ENCODE measurements at regions of chr15 and their contacts with region 1.

Region 1: DNA sequence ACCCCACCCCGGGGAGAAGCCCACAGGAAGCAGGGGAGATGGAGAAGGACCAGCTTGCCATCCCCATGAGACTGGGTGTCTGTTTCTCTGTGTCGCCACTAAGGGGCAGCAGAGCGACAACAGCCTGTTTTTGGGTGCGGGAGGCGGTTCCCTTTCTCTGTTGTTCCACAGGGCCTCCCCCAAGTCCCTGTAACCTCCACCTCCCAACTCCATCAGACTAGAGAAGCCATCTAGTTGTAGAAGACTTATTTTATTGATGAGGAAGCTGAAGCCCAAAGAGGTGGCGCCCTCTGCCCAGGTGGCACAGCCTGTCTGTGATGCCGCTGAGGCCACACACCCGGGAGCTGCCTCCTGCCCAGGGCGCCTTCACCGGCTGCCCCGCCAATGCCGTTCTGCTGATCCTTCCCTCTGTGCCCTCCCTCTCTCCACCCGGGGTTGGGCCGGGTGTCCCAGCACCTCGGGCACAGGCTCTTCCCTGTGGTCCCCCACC is 3.9 kb upstream of the CCDC9B start:
- DNase-seq: peak; percentile 78
- ATAC-seq: peak; percentile 74
- H3K4me3 Mint-ChIP-seq: no peak overlapping the region
- H3K27ac Mint-ChIP-seq: no peak overlapping the region
- H3K4me1 Mint-ChIP-seq: peaks cover 17% of the 10 kb centered on the region
- H3K27me3 Mint-ChIP-seq: no peaks in the 10 kb centered on the region
- CTCF ChIP-seq: peak; percentile 59

Region 2: DNA sequence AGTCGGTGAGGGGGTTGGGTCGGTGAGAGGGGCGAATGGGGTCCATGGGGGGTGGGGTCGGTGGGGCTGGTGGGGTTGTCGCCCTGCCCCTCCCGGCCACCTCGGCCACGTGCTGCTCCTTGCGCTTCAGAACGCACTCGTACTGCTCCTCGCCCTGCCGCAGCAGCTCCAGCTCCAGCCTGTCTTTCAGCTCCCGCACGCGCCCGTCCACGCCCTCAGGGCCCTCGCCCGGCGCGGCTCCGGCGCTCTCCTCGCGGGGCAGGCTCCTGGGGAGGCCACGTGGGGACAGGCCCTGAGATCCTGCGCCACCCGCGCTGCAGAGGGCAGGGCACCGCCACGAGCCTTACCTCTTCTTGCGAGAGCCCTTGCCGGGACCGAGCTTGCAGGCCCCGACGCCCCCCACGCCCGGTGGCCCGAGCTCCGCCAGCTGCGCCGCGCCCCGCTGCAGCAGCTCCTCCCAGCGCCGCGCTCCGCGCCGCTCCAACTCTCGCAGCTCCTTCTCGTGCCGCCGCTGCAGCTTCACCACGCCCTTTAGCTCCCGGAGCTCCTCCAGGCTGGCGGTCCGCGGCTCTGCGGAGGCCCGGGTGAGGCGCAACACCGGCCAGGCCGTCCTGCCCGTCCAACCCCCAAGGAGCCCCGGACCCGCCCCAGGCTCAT is 53.6 kb before region 1 on chr15:
- CTCF ChIA-PET with region 1: interaction called, 73 read pairs
- POLR2A ChIA-PET with region 1: no interaction called
- DNase-seq: peak; percentile 69
- ATAC-seq: peak; percentile 76
- H3K4me3 Mint-ChIP-seq: peak overlapping the region; percentile 56
- H3K27ac Mint-ChIP-seq: no peak overlapping the region
- H3K4me1 Mint-ChIP-seq: peaks cover 18% of the 10 kb centered on the region
- H3K27me3 Mint-ChIP-seq: peaks cover 42% of the 10 kb centered on the region
- CTCF ChIP-seq: no peak

Region 3: GRCh38 chr15:40330368-40330836 is 14.3 kb before region 1 on chr15:
- CTCF ChIA-PET with region 1: interaction called, 234 read pairs
- POLR2A ChIA-PET with region 1: no interaction called
- DNase-seq: no peak
- ATAC-seq: no peak
- H3K4me3 Mint-ChIP-seq: no peak overlapping the region
- H3K27ac Mint-ChIP-seq: no peak overlapping the region
- H3K4me1 Mint-ChIP-seq: peaks cover 55% of the 10 kb centered on the region
- H3K27me3 Mint-ChIP-seq: peaks cover under 1% of the 10 kb centered on the region; the same call in 1 of the 2 replicates
- CTCF ChIP-seq: no peak

Region 4: DNA sequence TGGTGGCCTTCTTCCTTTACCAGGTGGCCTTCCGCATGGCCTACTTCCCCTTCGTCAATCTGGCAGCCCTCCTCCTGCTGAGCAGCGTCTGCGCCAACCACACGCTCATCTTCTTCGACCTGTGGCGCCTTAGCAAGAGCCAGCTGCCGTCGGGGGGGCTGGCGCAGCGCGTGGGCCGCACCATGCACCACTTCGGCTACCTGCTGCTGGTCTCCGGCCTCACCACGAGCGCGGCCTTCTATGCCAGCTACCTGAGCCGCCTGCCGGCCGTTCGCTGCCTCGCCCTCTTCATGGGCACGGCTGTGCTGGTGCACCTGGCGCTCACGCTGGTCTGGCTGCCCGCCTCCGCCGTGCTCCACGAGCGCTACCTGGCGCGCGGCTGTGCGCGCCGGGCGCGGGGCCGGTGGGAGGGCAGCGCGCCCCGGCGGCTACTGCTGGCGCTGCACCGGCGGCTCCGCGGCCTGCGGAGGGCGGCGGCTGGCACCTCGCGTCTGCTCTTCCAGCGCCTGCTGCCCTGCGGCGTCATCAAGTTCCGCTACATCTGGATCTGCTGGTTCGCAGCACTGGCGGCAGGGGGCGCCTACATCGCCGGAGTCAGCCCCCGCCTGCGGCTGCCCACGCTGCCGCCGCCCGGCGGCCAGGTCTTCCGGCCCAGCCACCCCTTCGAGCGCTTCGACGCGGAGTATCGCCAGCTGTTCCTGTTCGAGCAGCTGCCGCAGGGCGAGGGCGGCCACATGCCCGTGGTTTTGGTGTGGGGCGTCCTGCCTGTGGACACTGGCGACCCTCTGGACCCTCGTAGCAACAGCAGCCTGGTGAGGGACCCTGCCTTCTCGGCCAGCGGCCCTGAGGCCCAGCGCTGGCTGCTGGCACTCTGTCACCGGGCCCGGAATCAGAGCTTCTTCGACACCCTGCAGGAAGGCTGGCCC is 23.3 kb after region 1 on chr15:
- CTCF ChIA-PET with region 1: interaction called, 87 read pairs
- POLR2A ChIA-PET with region 1: no interaction called
- DNase-seq: peak; percentile 90
- ATAC-seq: peak; percentile 89
- H3K4me3 Mint-ChIP-seq: peak overlapping the region; percentile 52
- H3K27ac Mint-ChIP-seq: no peak overlapping the region
- H3K4me1 Mint-ChIP-seq: peaks cover 21% of the 10 kb centered on the region
- H3K27me3 Mint-ChIP-seq: peaks cover 45% of the 10 kb centered on the region
- CTCF ChIP-seq: peak; percentile 77

Region 5: GRCh38 chr15:40398413-40398873 is 53.8 kb after region 1 on chr15:
- CTCF ChIA-PET with region 1: interaction called, 10 read pairs
- POLR2A ChIA-PET with region 1: interaction called, 7 read pairs
- DNase-seq: no peak
- ATAC-seq: no peak
- H3K4me3 Mint-ChIP-seq: no peak overlapping the region
- H3K27ac Mint-ChIP-seq: no peak overlapping the region
- H3K4me1 Mint-ChIP-seq: no peaks in the 10 kb centered on the region
- H3K27me3 Mint-ChIP-seq: no peaks in the 10 kb centered on the region
- CTCF ChIP-seq: no peak

Region 6: DNA sequence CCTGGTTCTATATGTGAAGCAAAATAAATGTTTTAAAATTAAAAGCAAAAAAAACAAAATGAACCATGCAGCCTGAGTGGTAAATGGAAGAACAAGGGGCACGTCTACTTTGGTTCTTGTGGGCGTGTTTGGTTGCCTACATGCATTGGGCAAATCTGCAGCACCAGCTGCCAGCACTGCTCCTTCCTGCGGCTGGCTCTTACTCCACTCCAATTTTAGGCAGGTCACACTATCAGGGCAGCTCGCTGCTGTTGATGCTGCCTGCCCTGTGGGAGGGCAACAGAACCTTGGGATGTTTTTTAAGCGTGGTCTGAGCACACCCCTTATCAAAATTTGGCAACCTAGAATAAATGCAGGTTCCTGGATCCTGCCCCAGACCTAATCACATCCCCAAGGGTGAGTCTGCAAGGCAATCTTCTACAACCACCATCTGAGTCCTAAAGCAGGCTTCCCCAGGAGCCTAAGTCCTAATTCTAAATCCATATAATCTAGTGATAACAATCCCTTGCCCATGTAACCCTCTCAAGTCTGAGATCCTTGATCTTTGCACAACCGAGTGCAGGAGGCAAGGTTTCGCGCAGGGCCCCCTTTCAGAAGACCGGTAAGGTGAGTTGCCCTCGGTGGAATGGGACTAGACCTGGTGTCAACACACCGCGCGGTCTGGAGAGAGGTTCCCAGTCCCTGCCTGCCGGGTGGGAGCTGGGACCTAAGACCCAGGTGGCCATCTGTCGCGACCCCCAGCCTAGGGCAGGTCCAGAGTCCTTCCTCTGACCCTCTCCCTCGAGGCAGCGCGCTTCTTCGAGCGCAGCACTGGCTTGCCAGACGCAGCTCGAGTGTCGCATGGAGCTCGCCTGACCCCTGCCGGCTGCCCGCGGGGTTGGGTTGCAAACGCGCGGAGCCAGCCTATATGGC is 76.8 kb after region 1 on chr15:
- CTCF ChIA-PET with region 1: interaction called, 98 read pairs
- POLR2A ChIA-PET with region 1: no interaction called
- DNase-seq: peak; percentile 89
- ATAC-seq: peak; percentile 88
- H3K4me3 Mint-ChIP-seq: peak overlapping the region; percentile 45
- H3K27ac Mint-ChIP-seq: peak overlapping the region; percentile 22; the same call in 1 of the 2 replicates
- H3K4me1 Mint-ChIP-seq: peaks cover 14% of the 10 kb centered on the region
- H3K27me3 Mint-ChIP-seq: no peaks in the 10 kb centered on the region; the same call in 1 of the 2 replicates
- CTCF ChIP-seq: peak; percentile 70

Measured in WTC11 (cell line).